ENCODE measurements at regions of chr21 and their contacts with region 1.

Region 1: GRCh38 chr21:31530897-31531705 is 128.4 kb upstream of the SOD1 start:
- DNase-seq: no peak
- H3K4me3 ChIP-seq: no peak overlapping the region
- H3K27ac ChIP-seq: no peak overlapping the region
- H3K4me1 ChIP-seq: peaks cover 2 to 15% (median 6%) of the 10 kb centered on the region in 4 experiments; a peak in 5 of 7 replicates
- H3K27me3 ChIP-seq: no peaks in the 10 kb centered on the region
- CTCF ChIP-seq: no peak
- EP300 ChIP-seq: no peak
- POLR2A ChIP-seq: no peak
- RAD21 ChIP-seq: no peak

Region 2: DNA sequence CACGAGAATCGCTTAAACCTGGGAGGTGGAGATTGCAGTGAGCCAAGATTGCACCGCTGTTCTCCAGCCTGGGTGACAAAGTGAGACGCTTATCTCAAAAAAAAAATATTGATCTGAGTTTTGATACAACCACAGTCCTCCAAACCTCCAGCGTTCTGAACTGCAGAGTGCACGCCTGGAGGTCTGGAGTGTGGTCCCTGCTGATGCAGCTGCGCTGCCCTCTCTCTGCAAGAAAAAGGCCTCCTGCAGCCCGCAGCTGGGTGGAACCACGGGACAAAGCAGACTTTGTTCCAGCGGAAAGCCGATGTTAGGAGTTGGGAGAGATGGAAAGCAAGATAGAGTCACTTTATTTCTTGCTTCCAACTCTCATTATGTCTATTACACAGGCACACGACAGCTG is 16.5 kb before region 1 on chr21:
- CTCF ChIA-PET with region 1: interaction called, 11 read pairs
- POLR2A ChIA-PET with region 1: no interaction called
- DNase-seq: peak in 1 of 2 experiments; percentile 64
- H3K4me3 ChIP-seq: peak overlapping the region in 2 of 4 experiments; percentile 10 to 16; a peak in 2 of 8 replicates
- H3K27ac ChIP-seq: no peak overlapping the region; the same call in 1 of the 2 replicates
- H3K4me1 ChIP-seq: peaks cover 0 to 9% (median 5%) of the 10 kb centered on the region in 4 experiments; a peak in 5 of 7 replicates
- H3K27me3 ChIP-seq: no peaks in the 10 kb centered on the region
- CTCF ChIP-seq: peak in 2 of 3 experiments; percentile 13 to 23; a peak in 1 of 4 replicates
- EP300 ChIP-seq: no peak
- POLR2A ChIP-seq: no peak
- RAD21 ChIP-seq: peak in 1 of 2 experiments; percentile 32; a peak in 1 of 4 replicates

Region 3: DNA sequence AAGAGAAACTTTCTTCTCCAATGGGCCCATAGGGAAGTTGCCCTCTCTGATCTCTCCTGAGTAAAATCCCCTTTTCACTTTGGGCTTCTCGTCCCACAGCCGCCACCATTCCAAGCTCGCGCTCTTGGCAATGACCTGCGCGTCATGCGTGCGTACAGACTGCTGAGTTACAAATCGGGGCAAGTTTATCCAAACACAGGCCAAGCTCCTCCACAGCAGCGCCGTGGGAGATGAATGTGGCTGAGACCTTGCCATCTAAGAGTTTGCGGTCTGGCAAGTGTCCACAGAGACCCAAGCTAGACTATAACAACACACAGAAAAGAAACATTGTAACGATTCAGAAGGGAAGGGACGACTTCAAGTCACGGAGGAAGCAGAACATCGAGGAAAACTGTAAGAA is 12.1 kb after region 1 on chr21:
- CTCF ChIA-PET with region 1: interaction called, 24 read pairs
- POLR2A ChIA-PET with region 1: interaction called, 3 read pairs
- DNase-seq: no peak
- H3K4me3 ChIP-seq: no peak overlapping the region
- H3K27ac ChIP-seq: no peak overlapping the region; the same call in 1 of the 2 replicates
- H3K4me1 ChIP-seq: peaks cover 0 to 7% (median 4%) of the 10 kb centered on the region in 4 experiments; a peak in 2 of 7 replicates
- H3K27me3 ChIP-seq: no peaks in the 10 kb centered on the region
- CTCF ChIP-seq: no peak
- EP300 ChIP-seq: no peak
- POLR2A ChIP-seq: no peak
- RAD21 ChIP-seq: no peak

Region 4: DNA sequence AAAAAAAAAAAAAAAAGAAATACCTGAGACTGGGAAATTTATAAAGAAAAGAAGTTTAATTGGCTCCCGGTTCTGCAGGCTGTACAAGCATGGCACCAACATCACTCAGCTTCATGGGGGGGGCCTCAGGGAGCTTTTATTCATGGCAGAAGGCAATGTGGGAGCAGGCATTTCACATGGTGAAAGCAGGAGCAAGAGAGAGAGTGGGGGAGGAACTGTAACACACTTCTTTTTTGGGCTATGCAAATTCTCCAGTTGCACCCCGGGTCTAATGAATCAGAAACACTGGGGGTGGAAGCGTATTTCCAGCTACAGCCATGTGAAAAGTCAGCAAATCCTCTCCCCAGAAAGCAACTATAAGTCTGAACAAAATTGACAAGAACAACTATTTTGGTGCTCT is 116.5 kb after region 1 on chr21:
- CTCF ChIA-PET with region 1: no interaction called
- POLR2A ChIA-PET with region 1: no interaction called
- DNase-seq: no peak
- H3K4me3 ChIP-seq: no peak overlapping the region
- H3K27ac ChIP-seq: no peak overlapping the region
- H3K4me1 ChIP-seq: no peaks in the 10 kb centered on the region
- H3K27me3 ChIP-seq: no peaks in the 10 kb centered on the region
- CTCF ChIP-seq: no peak
- EP300 ChIP-seq: no peak
- POLR2A ChIP-seq: no peak
- RAD21 ChIP-seq: no peak